ENCODE measurements at regions of chr17 and their contacts with region 1.

Region 1: GRCh38 chr17:18217412-18218015 is 7.9 kb upstream of the LLGL1 start:
- DNase-seq: peak; percentile 85
- ATAC-seq: peak; percentile 90

Region 2: DNA sequence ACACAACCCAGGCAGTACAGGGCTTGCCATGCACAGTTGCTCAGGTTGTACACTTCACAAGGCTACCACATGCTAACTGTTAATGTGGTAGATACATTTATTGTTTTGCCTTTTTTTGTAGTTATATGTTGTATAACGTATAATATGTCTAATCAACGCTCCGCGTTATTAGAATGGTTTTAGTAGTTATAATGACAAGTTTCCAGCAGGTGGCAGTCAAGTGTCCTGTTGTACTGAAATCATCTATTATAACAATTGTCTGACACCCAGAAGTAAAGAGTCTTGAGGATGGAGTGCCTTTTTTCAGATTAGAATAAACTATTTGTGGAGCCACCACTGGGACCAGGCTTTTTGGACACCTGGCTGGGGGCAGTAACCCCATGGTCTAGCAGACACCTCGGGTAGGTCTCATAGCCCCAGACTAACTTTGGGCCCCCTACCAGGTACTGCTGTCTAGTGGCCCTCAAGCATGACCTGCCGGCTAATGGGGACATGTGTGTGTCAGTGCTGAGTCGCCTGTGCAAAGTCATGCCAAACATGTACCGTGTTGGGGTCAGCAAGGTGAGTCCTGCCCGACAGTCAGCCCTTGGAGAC is 76.2 kb before region 1 on chr17:
- intact Hi-C with region 1: loop called (anchors 5 kb)
- DNase-seq: no peak
- ATAC-seq: peak; percentile 50

Region 3: GRCh38 chr17:18166894-18167293 is 50.6 kb before region 1 on chr17:
- intact Hi-C with region 1: no loop called
- DNase-seq: no peak
- ATAC-seq: no peak

Region 4: GRCh38 chr17:18314731-18315561 is 97.4 kb after region 1 on chr17 and contains the starts of genes SMCR8 and TOP3A:
- intact Hi-C with region 1: loop called (anchors 5 kb)
- DNase-seq: peak; percentile 98
- ATAC-seq: peak; percentile 98
- total RNA-seq, gene SMCR8: 13.1 TPM
- total RNA-seq, gene TOP3A: 10.3 TPM